ENCODE measurements at regions of chr4 and their contacts with region 1.

Region 1: DNA sequence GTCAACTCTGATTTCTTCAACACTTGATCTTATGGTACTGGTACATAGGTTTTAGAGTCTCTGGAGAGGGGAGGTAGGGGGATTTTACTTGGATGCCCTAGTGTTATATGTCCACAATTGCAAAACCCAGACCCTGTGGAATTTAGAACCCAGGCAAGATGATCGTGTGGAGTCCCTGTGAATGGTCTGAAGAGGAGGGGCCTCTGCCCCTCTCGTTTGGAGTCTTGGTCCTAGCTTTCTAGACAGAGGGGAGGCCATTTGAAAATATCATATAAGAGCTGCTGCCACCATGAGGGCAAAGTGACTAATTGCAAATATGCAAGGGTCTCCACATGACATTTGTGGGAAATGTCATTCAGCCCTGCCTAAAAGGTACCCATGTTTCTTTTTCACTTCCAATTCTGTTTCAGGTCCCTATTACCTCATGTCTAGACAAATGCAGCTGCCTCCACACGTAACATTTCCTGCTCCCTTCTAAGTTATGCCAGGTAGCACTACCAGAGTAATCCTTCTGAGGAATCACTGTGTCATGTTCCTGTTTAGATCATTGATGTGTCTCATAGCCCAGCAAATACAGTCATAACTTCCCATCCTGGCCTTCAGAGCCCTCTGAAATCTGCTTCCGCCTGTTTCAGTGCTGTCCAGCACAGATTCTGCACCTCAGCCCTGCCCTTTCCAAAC is 126.8 kb downstream of the KLHL8 start:
- DNase-seq: peak in 1 of 3 donors; percentile 48
- ATAC-seq: peak; percentile 52
- H3K4me3 ChIP-seq: no peak overlapping the region
- H3K4me1 ChIP-seq: peaks cover 8% of the 10 kb centered on the region
- CTCF ChIP-seq: peak; percentile 11

Region 2: GRCh38 chr4:86921608-86922252 is 171.9 kb before region 1 on chr4:
- intact Hi-C with region 1: loop called (anchors 1 to 10 kb)
- DNase-seq: no peak
- ATAC-seq: no peak
- H3K4me3 ChIP-seq: no peak overlapping the region
- H3K4me1 ChIP-seq: no peaks in the 10 kb centered on the region
- CTCF ChIP-seq: no peak

Region 3: DNA sequence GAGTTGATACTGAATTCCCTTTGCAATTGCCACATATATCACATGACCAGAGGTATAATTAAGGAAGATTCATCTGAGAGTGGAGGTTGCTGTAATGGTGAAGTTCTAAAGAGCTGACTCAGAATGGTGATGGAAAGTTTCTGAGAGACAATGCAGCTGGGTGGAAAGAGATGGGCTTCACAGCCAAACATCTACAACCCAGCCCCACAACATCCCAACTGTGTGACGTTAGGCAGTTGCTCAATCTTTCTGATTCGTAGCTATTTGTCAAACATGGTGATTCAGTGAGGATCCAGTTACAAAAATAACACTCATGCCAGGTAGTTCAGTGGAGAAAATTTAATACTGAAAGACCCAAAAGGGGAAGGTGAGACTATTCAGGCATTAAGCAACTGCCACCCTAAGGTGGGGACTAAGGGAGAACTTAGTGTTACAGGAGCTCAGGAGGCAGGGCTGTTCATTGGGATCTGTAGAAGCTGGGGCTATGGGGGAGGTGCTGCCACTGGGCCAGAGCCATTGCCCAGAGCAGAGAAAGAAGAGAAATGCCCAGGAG is 165.7 kb before region 1 on chr4:
- intact Hi-C with region 1: loop called in 1 of 2 experiments (anchors 10 kb)
- DNase-seq: no peak
- ATAC-seq: peak; percentile 48
- H3K4me3 ChIP-seq: no peak overlapping the region
- H3K4me1 ChIP-seq: no peaks in the 10 kb centered on the region
- CTCF ChIP-seq: no peak

Measured in mucosa of descending colon (tissue), 3 donors.